Left cardiac atrium (tissue), 4 donors: ENCODE measurements at regions of chr18 and their contacts with region 1.

Region 1: DNA sequence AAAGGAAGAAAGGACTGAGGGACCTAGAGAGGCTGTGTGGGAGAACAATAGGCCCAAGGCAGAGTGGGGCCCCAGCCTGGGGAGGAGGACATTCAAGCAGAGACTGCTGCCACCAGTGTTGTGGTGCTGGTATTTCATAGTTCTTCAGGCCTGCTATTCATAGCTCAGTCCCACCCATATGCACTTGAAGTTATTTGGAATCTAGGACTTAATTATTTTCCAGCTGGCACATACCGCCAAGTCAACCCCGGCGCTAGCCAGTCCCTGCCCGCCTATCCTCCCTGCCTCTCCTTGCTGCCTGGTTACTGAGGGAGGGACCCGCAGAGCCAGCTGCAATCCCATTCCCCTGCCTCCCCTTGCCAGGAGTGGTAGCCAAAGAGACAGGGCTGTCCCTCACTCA is 141.2 kb downstream of the CABLES1 start:
- DNase-seq: peak; percentile 26
- ATAC-seq: peak; percentile 84 to 95

Region 2: DNA sequence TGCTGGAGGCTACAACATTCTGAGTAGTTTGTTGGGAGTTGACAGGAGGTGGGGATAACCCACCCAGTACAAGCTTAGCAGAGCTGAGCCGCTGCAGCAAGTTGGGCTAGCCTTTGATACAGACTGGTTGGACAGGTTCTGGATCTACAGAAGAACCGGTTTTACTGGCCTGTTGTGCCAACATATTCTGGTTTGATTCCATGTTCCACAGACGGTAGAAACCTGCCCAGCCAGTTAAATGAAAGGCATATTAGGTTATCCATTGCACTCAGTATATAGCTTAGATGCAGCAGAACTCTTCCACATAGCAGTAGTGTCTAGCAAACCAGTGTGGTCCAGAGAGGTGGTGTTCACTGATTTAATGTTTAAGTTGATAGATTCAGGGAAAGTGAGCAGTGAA is 362.6 kb before region 1 on chr18:
- intact Hi-C with region 1: no loop called
- DNase-seq: no peak
- ATAC-seq: no peak

Region 3: GRCh38 chr18:23213200-23213599 is 63.3 kb before region 1 on chr18:
- intact Hi-C with region 1: loop called in 1 of 2 experiments (anchors 10 kb)
- DNase-seq: no peak
- ATAC-seq: no peak

Region 4: DNA sequence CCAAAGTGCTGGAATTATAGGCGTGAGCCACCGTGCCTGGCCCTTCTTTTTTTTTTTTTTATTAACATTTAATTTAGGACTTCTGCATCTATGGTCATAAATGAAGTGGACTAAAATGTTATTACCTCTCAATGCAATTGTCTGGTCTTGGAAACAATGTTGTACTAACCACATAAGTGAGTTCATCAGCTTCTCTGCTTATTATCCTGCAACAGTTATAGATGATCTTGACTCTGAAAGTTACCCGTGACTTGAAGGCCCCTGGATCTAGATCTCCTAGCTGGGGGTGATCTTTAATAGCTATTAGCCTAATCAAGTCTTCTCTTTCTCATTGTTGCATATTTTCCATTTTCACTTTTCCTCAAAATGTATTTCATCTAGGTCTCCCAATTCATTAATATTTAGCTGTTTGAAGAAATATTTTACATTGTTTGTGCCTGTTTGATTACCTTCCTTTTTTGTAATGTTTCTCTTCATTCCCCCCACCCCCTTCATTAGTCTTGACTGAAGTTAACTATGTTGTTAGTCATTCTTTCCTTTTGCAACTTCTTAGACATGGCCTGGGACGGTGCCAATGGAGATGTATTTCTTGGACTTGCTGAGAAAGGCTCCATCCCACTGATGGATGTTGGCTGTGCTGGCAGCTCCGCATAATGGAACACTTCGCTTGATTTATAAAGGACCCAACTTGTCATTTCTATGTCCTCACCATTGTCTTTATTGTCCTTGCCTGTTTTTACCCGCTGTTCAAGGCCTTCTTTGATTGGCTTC is 35.1 kb after region 1 on chr18:
- intact Hi-C with region 1: no loop called
- DNase-seq: peak; percentile 88
- ATAC-seq: peak; percentile 48 to 82